ENCODE measurements at regions of chr2 and their contacts with region 1.

Region 1: GRCh38 chr2:190929919-190930318 is 49.3 kb downstream of the GLS start:
- DNase-seq: no peak
- ATAC-seq: no peak
- H3K4me3 ChIP-seq: no peak overlapping the region
- H3K27ac ChIP-seq: no peak overlapping the region
- H3K4me1 ChIP-seq: no peaks in the 10 kb centered on the region
- H3K27me3 ChIP-seq: no peaks in the 10 kb centered on the region
- CTCF ChIP-seq: no peak

Region 2: DNA sequence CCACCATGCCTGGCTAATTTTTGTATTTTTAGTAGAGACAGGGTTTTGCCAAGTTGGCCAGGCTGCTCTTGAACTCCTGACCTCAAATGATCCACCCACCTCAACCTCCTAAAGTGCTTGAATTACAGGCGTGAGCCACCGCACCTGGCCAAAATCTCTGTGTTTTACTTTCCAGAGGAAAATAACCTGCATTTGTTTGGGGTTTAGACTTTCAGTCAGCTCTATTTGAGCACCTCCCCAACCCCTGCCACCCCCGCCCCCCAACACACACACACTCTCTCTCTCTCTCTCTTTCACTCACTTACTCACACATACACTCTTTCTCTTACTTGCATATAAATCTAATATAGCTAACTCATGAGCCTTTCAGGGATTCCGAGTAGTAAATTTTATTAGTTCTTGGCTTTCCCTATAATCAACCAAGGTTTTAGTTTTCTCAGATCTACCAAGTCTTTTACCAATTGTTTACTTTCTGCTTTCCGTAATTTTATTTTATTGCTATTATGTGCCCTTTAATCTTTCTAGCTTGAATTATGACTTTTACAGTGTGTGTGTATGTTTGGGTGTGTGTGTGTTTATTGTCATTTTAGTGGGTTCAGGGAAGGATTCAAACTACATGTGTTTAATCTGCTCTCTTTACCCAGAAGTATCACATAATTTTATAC is 497.2 kb before region 1 on chr2:
- intact Hi-C with region 1: no loop called
- DNase-seq: no peak
- ATAC-seq: no peak
- H3K4me3 ChIP-seq: no peak overlapping the region
- H3K27ac ChIP-seq: no peak overlapping the region
- H3K4me1 ChIP-seq: no peaks in the 10 kb centered on the region
- H3K27me3 ChIP-seq: no peaks in the 10 kb centered on the region
- CTCF ChIP-seq: no peak

Region 3: GRCh38 chr2:190791347-190791975 is 138.5 kb before region 1 on chr2:
- intact Hi-C with region 1: no loop called
- DNase-seq: no peak
- ATAC-seq: peak; percentile 84
- H3K4me3 ChIP-seq: no peak overlapping the region
- H3K27ac ChIP-seq: peak overlapping the region; percentile 0
- H3K4me1 ChIP-seq: peaks cover 9% of the 10 kb centered on the region
- H3K27me3 ChIP-seq: no peaks in the 10 kb centered on the region
- CTCF ChIP-seq: no peak

Region 4: GRCh38 chr2:190979906-190980629 is 50.1 kb after region 1 on chr2:
- intact Hi-C with region 1: loop called (anchors 10 kb)
- DNase-seq: peak; percentile 86
- ATAC-seq: peak; percentile 93
- H3K4me3 ChIP-seq: no peak overlapping the region
- H3K27ac ChIP-seq: peak overlapping the region; percentile 77
- H3K4me1 ChIP-seq: peaks cover 23% of the 10 kb centered on the region
- H3K27me3 ChIP-seq: no peaks in the 10 kb centered on the region
- CTCF ChIP-seq: no peak